CD4-positive, alpha-beta memory T cell (primary cell): ENCODE measurements at regions of chr2 and their contacts with region 1.

Region 1: GRCh38 chr2:118078749-118079148 is 9.5 kb upstream of the INSIG2 start:
- DNase-seq: no peak
- H3K4me3 ChIP-seq: no peak overlapping the region
- H3K4me3 Mint-ChIP-seq: no peak overlapping the region
- H3K27ac ChIP-seq: no peak overlapping the region
- H3K27ac Mint-ChIP-seq: no peak overlapping the region
- H3K4me1 ChIP-seq: no peaks in the 10 kb centered on the region
- H3K4me1 Mint-ChIP-seq: no peaks in the 10 kb centered on the region
- H3K27me3 ChIP-seq: no peaks in the 10 kb centered on the region
- H3K27me3 Mint-ChIP-seq: peaks cover 3 to 10% of the 10 kb centered on the region in 2 donors

Region 2: DNA sequence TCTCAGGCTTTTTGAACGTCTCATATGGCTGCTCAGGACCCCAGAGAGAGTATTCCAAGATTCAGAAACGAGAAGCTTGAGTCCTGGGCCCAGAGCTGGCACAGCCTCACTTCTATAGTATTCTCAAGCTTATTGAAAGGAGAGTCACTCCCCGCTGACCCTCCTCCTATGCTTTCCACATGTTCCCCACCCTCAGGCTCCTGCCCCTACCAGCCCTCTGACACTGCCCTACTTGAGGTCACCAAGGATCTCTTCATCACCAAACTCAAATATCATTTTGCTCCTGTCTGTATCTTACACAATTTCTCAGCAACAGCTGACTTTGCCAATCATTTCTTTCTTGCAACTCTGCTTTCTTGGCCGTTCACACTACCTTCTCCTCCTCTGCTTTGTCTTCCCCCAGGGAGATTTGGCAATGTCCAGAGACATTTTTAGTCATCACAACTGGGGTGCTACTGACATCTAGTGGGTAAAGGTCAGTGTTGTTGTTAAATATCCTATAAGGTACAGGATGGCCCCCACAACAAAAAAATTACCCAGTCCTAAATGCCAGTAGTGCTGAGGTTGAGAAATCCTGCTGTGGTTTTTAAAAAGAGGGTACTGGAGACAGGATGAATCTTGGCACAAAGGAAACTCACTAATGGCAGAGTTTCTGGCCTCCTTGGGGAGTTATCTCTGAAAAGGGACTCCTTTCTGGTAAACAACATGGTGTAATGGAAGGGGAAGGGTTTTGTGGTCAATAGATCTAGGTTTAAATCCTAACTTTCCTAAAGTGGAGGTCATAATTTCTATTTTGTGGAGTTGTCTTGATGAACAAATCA is 17.4 kb before region 1 on chr2:
- CTCF ChIA-PET with region 1: no interaction called
- POLR2A ChIA-PET with region 1: no interaction called
- intact Hi-C with region 1: no loop called
- DNase-seq: no peak
- H3K4me3 ChIP-seq: no peak overlapping the region
- H3K4me3 Mint-ChIP-seq: no peak overlapping the region
- H3K27ac ChIP-seq: no peak overlapping the region
- H3K27ac Mint-ChIP-seq: peak overlapping the region in 2 of 7 donors; percentile 44 to 54
- H3K4me1 ChIP-seq: peaks cover 7% of the 10 kb centered on the region
- H3K4me1 Mint-ChIP-seq: peaks cover 1 to 8% (median 6%) of the 10 kb centered on the region in 4 donors
- H3K27me3 ChIP-seq: peaks cover 3% of the 10 kb centered on the region
- H3K27me3 Mint-ChIP-seq: peaks cover 10 to 20% of the 10 kb centered on the region in 2 donors

Region 3: GRCh38 chr2:118112771-118113334 is 34.1 kb after region 1 on chr2:
- CTCF ChIA-PET with region 1: no interaction called
- POLR2A ChIA-PET with region 1: no interaction called
- intact Hi-C with region 1: loop called (anchors 1 kb)
- DNase-seq: no peak
- H3K4me3 ChIP-seq: no peak overlapping the region
- H3K4me3 Mint-ChIP-seq: no peak overlapping the region
- H3K27ac ChIP-seq: no peak overlapping the region
- H3K27ac Mint-ChIP-seq: peak overlapping the region in 1 of 7 donors; percentile 20
- H3K4me1 ChIP-seq: no peaks in the 10 kb centered on the region
- H3K4me1 Mint-ChIP-seq: peaks cover 0 to 3% (median 2%) of the 10 kb centered on the region in 4 donors
- H3K27me3 ChIP-seq: no peaks in the 10 kb centered on the region
- H3K27me3 Mint-ChIP-seq: no peaks in the 10 kb centered on the region

Region 4: DNA sequence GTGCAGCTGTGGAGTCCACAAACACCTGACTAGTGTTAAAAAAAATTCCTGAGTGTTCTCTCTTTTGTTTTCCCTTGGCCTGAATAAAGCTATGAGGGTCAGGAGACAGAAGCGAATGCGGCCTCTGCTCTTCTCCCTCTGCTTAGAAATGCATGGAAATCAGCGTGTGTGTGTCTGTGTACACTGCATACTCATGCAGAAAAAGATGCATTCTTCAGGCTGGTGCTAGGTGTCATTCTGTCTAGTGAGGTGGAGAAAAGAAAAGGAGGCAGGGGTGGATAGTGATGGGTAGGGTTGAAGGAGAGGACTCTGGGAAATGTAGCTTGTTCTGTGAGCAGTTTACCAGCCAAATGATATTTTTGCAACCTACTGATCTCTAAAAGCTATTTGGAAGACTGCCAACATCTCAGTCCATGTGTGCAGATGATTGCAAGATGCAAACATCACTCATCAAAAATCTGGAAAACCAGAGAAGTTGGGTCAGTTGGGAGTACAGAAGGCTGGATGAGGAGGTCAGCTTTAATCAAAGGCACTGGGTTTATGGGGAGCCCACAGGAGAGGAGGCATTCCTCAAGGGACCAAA is 187.2 kb after region 1 on chr2:
- CTCF ChIA-PET with region 1: no interaction called
- POLR2A ChIA-PET with region 1: no interaction called
- intact Hi-C with region 1: no loop called
- DNase-seq: no peak
- H3K4me3 ChIP-seq: no peak overlapping the region
- H3K4me3 Mint-ChIP-seq: no peak overlapping the region
- H3K27ac ChIP-seq: no peak overlapping the region
- H3K27ac Mint-ChIP-seq: no peak overlapping the region
- H3K4me1 ChIP-seq: no peaks in the 10 kb centered on the region
- H3K4me1 Mint-ChIP-seq: no peaks in the 10 kb centered on the region
- H3K27me3 ChIP-seq: no peaks in the 10 kb centered on the region
- H3K27me3 Mint-ChIP-seq: peaks cover 8 to 13% of the 10 kb centered on the region in 2 donors